Heart right ventricle (tissue), 16 donors: ENCODE measurements at regions of chr4 and their contacts with region 1.

Region 1: GRCh38 chr4:149838036-149838435 is 22.4 kb upstream of the IQCM start:
- DNase-seq: no peak
- ATAC-seq: no peak
- H3K4me3 ChIP-seq: no peak overlapping the region
- H3K27ac ChIP-seq: no peak overlapping the region
- H3K4me1 ChIP-seq: no peaks in the 10 kb centered on the region
- H3K27me3 ChIP-seq: no peaks in the 10 kb centered on the region
- CTCF ChIP-seq: no peak

Region 2: GRCh38 chr4:149211876-149212275 is 626.2 kb before region 1 on chr4:
- intact Hi-C with region 1: loop called in 1 of 10 experiments (anchors 2 kb)
- DNase-seq: no peak
- ATAC-seq: no peak
- H3K4me3 ChIP-seq: no peak overlapping the region
- H3K27ac ChIP-seq: no peak overlapping the region
- H3K4me1 ChIP-seq: no peaks in the 10 kb centered on the region
- H3K27me3 ChIP-seq: no peaks in the 10 kb centered on the region
- CTCF ChIP-seq: no peak

Region 3: DNA sequence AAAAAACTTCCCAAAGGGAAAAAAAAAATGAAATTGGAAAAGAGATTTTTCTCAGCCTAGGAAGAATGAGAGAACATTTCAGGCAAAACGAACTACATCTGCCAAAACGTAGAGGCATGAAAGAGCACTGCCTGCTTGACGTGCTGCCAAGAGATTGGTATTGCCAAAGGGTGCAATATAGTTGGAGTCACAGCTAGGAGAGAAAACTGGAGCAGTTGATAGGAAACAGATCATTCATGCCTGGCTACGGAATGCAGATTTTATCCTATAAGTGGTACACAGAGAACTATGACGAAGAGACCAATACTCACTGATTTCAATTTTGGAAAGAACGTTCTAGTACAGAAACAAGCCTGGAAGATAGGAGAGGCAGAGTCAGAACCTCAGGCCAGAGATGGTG is 46.0 kb after region 1 on chr4:
- intact Hi-C with region 1: no loop called
- DNase-seq: peak; percentile 21 to 26
- ATAC-seq: peak in 6 of 8 donors; percentile 49 to 87 (median 80)
- H3K4me3 ChIP-seq: no peak overlapping the region
- H3K27ac ChIP-seq: peak overlapping the region in 1 of 10 donors; percentile 18
- H3K4me1 ChIP-seq: peaks cover 0 to 13% (median 0%) of the 10 kb centered on the region in 9 donors
- H3K27me3 ChIP-seq: no peaks in the 10 kb centered on the region
- CTCF ChIP-seq: no peak